ENCODE measurements at regions of chr9 and their contacts with region 1.

Region 1: DNA sequence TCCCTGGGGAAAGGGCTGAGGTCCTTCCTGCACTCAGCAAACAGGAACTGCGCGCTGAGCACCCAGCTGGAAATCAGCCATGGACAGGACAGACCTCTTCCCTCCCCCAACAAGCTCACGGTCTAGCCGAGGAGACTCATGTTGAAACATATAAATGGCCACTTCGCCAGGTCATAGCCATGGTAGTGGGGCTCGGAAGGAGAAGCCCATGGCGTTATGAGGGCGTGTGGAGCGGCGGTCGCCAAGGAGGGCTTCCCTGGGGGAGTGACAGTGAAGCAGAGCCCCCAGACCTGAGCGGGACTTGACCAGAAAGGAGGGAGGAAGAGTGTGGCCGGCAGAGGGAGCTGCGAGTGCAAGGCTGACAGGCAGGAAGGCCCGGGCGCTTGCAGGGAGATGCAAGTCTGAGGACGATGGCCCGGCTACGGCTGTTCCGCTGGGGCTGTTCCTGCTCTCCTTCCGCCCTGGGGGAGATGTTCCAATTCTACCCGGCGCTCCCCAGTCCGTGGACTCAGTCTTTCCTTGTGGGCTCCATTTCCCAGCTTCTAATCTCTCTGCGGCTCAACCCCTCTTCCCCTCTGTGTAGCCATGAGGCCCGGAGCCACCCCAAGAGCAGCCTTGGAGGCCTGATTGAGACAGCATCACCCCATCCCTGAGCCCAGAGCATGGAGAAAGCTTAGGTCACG is 43.9 kb upstream of the PRRC2B start:
- DNase-seq: peak; percentile 77
- ATAC-seq: peak; percentile 99
- H3K4me3 ChIP-seq: peak overlapping the region; percentile 23; the same call in 1 of the 2 replicates
- H3K27ac ChIP-seq: no peak overlapping the region
- H3K4me1 ChIP-seq: no peaks in the 10 kb centered on the region
- H3K27me3 ChIP-seq: no peaks in the 10 kb centered on the region; the same call in 1 of the 2 replicates
- CTCF ChIP-seq: peak; percentile 84
- POLR2A ChIP-seq: no peak
- RAD21 ChIP-seq: peak; percentile 90

Region 2: GRCh38 chr9:131203431-131204218 is 146.4 kb before region 1 on chr9:
- CTCF ChIA-PET with region 1: no interaction called
- POLR2A ChIA-PET with region 1: no interaction called
- dilution Hi-C with region 1: no loop called
- in situ Hi-C with region 1: no loop called
- intact Hi-C with region 1: no loop called
- DNase-seq: no peak
- ATAC-seq: no peak
- H3K4me3 ChIP-seq: no peak overlapping the region
- H3K27ac ChIP-seq: no peak overlapping the region
- H3K4me1 ChIP-seq: no peaks in the 10 kb centered on the region
- H3K27me3 ChIP-seq: no peaks in the 10 kb centered on the region
- CTCF ChIP-seq: peak; percentile 25; the same call in 1 of the 2 replicates
- POLR2A ChIP-seq: no peak
- RAD21 ChIP-seq: 0 out of 2 replicates have a peak, but pooled peaks have one; percentile 20

Region 3: GRCh38 chr9:131423171-131423581 is 73.2 kb after region 1 on chr9:
- CTCF ChIA-PET with region 1: no interaction called
- POLR2A ChIA-PET with region 1: no interaction called
- dilution Hi-C with region 1: no loop called
- in situ Hi-C with region 1: no loop called
- intact Hi-C with region 1: loop called (anchors 5 kb)
- DNase-seq: peak; percentile 91
- ATAC-seq: peak; percentile 77
- H3K4me3 ChIP-seq: no peak overlapping the region
- H3K27ac ChIP-seq: no peak overlapping the region; the same call in 1 of the 2 replicates
- H3K4me1 ChIP-seq: peaks cover 39% of the 10 kb centered on the region
- H3K27me3 ChIP-seq: no peaks in the 10 kb centered on the region
- CTCF ChIP-seq: no peak
- POLR2A ChIP-seq: no peak
- RAD21 ChIP-seq: no peak

Measured in IMR-90 (cell line).